Naive thymus-derived CD4-positive, alpha-beta T cell (primary cell): ENCODE measurements at regions of chr4 and their contacts with region 1.

Region 1: GRCh38 chr4:87235020-87235671 is 14.7 kb upstream of the KLHL8 start:
- DNase-seq: no peak
- ATAC-seq: no peak
- H3K4me3 ChIP-seq: peak overlapping the region; percentile 36
- H3K4me3 Mint-ChIP-seq: peak overlapping the region; percentile 62 to 87 (median 83)
- H3K27ac ChIP-seq: no peak overlapping the region
- H3K27ac Mint-ChIP-seq: peak overlapping the region in 2 of 9 donors; percentile 61 to 66
- H3K4me1 ChIP-seq: peaks cover 0 to 4% of the 10 kb centered on the region in 2 donors
- H3K4me1 Mint-ChIP-seq: peaks cover 0 to 6% (median 0%) of the 10 kb centered on the region in 7 donors
- H3K27me3 ChIP-seq: no peaks in the 10 kb centered on the region
- H3K27me3 Mint-ChIP-seq: peaks cover 0 to 18% (median 5%) of the 10 kb centered on the region in 5 donors

Region 2: DNA sequence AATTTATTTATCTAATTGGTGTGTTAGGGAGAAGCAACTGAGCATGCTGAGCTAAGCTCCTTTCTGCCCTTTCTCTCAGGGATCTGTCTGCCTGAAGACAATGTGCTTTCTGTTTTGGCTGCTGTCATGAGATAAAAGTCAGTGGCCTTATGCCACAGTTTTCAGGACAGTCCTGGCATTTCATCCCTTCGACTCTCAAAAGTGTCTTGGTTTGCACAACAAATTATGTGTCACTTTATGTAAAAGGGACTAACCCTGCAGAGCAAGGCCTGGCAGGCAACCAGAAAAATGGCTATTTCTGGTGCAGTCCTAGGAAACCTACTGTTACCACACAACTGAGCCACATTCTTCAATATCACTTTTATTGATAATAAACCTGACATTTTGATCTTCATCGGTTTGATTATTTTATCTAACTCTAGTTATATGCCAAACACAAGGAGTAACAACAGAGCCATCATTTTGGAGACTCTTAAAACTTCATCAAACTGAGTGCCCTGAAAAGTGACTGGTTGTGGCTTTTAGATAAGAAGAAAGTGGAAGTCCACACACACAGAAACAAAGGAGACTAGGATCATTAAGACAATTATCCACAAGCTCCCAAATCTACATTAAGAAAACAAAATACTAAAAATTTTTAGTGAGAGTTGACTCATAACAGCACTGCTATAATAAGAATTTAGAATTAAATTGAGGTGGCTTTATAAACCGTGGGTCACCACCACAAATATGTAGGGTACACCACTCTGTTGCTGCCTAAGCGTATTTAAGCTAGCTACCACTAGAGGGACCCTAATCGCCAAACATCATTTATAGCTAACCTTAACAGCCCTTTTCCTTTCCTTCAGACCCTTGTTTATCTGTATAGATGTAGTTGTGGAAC is 736.9 kb before region 1 on chr4:
- CTCF ChIA-PET with region 1: interaction called, 3 read pairs
- POLR2A ChIA-PET with region 1: no interaction called
- intact Hi-C with region 1: loop called (anchors 2 to 5 kb)
- DNase-seq: peak in 4 of 9 donors; percentile 4 to 26 (median 18)
- ATAC-seq: peak; percentile 78
- H3K4me3 ChIP-seq: no peak overlapping the region
- H3K4me3 Mint-ChIP-seq: no peak overlapping the region
- H3K27ac ChIP-seq: no peak overlapping the region
- H3K27ac Mint-ChIP-seq: no peak overlapping the region
- H3K4me1 ChIP-seq: no peaks in the 10 kb centered on the region
- H3K4me1 Mint-ChIP-seq: peaks cover 0 to 13% (median 0%) of the 10 kb centered on the region in 7 donors
- H3K27me3 ChIP-seq: no peaks in the 10 kb centered on the region
- H3K27me3 Mint-ChIP-seq: peaks cover 9 to 21% (median 12%) of the 10 kb centered on the region in 5 donors

Region 3: GRCh38 chr4:86924811-86925210 is 310.3 kb before region 1 on chr4:
- CTCF ChIA-PET with region 1: interaction called, 5 read pairs
- POLR2A ChIA-PET with region 1: no interaction called
- intact Hi-C with region 1: loop called (anchors 1 kb)
- DNase-seq: no peak
- ATAC-seq: no peak
- H3K4me3 ChIP-seq: no peak overlapping the region
- H3K4me3 Mint-ChIP-seq: no peak overlapping the region
- H3K27ac ChIP-seq: no peak overlapping the region
- H3K27ac Mint-ChIP-seq: peak overlapping the region in 3 of 9 donors; percentile 8 to 50 (median 32)
- H3K4me1 ChIP-seq: no peaks in the 10 kb centered on the region
- H3K4me1 Mint-ChIP-seq: peaks cover 0 to 25% (median 5%) of the 10 kb centered on the region in 7 donors
- H3K27me3 ChIP-seq: no peaks in the 10 kb centered on the region
- H3K27me3 Mint-ChIP-seq: no peaks in the 10 kb centered on the region

Region 4: DNA sequence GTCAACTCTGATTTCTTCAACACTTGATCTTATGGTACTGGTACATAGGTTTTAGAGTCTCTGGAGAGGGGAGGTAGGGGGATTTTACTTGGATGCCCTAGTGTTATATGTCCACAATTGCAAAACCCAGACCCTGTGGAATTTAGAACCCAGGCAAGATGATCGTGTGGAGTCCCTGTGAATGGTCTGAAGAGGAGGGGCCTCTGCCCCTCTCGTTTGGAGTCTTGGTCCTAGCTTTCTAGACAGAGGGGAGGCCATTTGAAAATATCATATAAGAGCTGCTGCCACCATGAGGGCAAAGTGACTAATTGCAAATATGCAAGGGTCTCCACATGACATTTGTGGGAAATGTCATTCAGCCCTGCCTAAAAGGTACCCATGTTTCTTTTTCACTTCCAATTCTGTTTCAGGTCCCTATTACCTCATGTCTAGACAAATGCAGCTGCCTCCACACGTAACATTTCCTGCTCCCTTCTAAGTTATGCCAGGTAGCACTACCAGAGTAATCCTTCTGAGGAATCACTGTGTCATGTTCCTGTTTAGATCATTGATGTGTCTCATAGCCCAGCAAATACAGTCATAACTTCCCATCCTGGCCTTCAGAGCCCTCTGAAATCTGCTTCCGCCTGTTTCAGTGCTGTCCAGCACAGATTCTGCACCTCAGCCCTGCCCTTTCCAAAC is 141.6 kb before region 1 on chr4:
- CTCF ChIA-PET with region 1: no interaction called
- POLR2A ChIA-PET with region 1: no interaction called
- intact Hi-C with region 1: loop called in 1 of 2 experiments (anchors 2 kb)
- DNase-seq: peak in 7 of 9 donors; percentile 26 to 60 (median 51)
- ATAC-seq: peak; percentile 90
- H3K4me3 ChIP-seq: no peak overlapping the region
- H3K4me3 Mint-ChIP-seq: no peak overlapping the region
- H3K27ac ChIP-seq: no peak overlapping the region
- H3K27ac Mint-ChIP-seq: peak overlapping the region; percentile 26 to 91 (median 74)
- H3K4me1 ChIP-seq: no peaks in the 10 kb centered on the region
- H3K4me1 Mint-ChIP-seq: peaks cover 10 to 47% (median 25%) of the 10 kb centered on the region in 7 donors
- H3K27me3 ChIP-seq: no peaks in the 10 kb centered on the region
- H3K27me3 Mint-ChIP-seq: no peaks in the 10 kb centered on the region

Region 5: GRCh38 chr4:87150498-87151261 is 84.5 kb before region 1 on chr4:
- CTCF ChIA-PET with region 1: interaction called, 46 read pairs
- POLR2A ChIA-PET with region 1: no interaction called
- intact Hi-C with region 1: loop called (anchors 1 kb)
- DNase-seq: peak in 8 of 9 donors; percentile 32 to 71 (median 55)
- ATAC-seq: peak; percentile 85
- H3K4me3 ChIP-seq: no peak overlapping the region
- H3K4me3 Mint-ChIP-seq: no peak overlapping the region
- H3K27ac ChIP-seq: no peak overlapping the region
- H3K27ac Mint-ChIP-seq: no peak overlapping the region
- H3K4me1 ChIP-seq: no peaks in the 10 kb centered on the region
- H3K4me1 Mint-ChIP-seq: peaks cover 0 to 4% (median 0%) of the 10 kb centered on the region in 7 donors
- H3K27me3 ChIP-seq: no peaks in the 10 kb centered on the region
- H3K27me3 Mint-ChIP-seq: no peaks in the 10 kb centered on the region

Region 6: DNA sequence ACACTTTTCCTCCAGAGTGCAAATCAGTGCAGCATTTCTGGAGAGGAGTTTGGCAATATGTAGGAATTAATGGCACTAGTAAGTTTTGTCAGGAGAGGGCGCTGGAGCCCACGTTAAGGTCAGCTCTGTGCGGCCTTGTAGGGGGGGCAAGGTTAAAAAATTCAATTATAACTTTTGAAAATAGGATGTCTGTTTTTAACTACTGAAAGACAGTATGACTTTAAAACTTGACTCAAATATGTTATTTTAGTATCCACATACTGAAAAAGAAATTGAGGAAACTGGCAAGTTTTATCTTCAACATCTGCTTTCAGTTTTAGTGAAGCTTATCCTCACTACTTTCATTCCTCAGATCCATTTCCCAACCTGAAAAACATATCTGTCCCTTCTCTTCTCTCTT is 118.4 kb after region 1 on chr4:
- CTCF ChIA-PET with region 1: no interaction called
- POLR2A ChIA-PET with region 1: no interaction called
- intact Hi-C with region 1: no loop called
- DNase-seq: peak in 6 of 9 donors; percentile 5 to 41 (median 21)
- ATAC-seq: peak; percentile 64
- H3K4me3 ChIP-seq: no peak overlapping the region
- H3K4me3 Mint-ChIP-seq: no peak overlapping the region
- H3K27ac ChIP-seq: no peak overlapping the region
- H3K27ac Mint-ChIP-seq: no peak overlapping the region
- H3K4me1 ChIP-seq: no peaks in the 10 kb centered on the region
- H3K4me1 Mint-ChIP-seq: peaks cover 0 to 6% (median 0%) of the 10 kb centered on the region in 7 donors
- H3K27me3 ChIP-seq: no peaks in the 10 kb centered on the region
- H3K27me3 Mint-ChIP-seq: no peaks in the 10 kb centered on the region